Transverse colon (tissue), 4 donors: ENCODE measurements at regions of chr4 and their contacts with region 1.

Region 1: DNA sequence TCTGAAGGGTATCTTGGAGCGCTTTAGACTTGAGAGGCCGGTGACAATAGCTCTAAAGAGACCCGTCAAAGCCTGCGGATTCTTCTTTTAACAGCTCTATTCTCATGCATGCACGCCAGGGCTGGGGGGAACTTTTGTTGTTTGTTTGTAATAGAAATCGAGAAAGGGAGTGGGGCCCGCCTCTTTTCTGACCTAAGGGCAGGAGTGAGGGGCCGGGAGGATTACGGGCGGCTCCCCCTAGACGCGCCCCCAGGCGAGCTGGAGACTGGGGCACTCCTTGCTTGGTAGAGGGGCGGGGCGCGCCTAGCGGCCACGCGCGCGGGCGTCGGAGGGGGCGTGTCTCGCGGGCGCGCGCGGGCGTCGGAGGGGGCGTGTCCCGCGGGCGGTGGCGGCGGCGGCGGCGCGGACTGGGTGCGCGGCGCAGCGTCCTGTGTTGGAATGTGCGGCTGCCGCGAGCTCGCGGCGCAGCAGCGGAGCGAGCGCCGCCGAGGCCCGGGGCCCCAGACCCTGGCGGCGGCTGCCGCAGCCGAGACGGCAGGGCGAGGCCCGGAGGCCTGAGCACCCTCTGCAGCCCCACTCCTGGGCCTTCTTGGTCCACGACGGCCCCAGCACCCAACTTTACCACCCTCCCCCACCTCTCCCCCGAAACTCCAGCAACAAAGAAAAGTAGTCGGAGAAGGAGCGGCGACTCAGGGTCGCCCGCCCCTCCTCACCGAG is at the start of gene REST:
- DNase-seq: peak; percentile 88
- H3K4me3 ChIP-seq: peak within 1 kb of the TSS; percentile 78 to 99 (median 93)
- H3K27ac ChIP-seq: peak within 1 kb of the TSS; percentile 92 to 98 (median 97)
- H3K4me1 ChIP-seq: peaks cover 17 to 40% (median 24%) of the 10 kb centered on the region in 4 donors
- H3K27me3 ChIP-seq: no peaks in the 10 kb centered on the region
- CTCF ChIP-seq: no peak
- EP300 ChIP-seq: no peak
- POLR2A ChIP-seq: peak; percentile 20
- total RNA-seq, gene REST: 18.7 to 47.8 (median 27.1) TPM

Region 2: DNA sequence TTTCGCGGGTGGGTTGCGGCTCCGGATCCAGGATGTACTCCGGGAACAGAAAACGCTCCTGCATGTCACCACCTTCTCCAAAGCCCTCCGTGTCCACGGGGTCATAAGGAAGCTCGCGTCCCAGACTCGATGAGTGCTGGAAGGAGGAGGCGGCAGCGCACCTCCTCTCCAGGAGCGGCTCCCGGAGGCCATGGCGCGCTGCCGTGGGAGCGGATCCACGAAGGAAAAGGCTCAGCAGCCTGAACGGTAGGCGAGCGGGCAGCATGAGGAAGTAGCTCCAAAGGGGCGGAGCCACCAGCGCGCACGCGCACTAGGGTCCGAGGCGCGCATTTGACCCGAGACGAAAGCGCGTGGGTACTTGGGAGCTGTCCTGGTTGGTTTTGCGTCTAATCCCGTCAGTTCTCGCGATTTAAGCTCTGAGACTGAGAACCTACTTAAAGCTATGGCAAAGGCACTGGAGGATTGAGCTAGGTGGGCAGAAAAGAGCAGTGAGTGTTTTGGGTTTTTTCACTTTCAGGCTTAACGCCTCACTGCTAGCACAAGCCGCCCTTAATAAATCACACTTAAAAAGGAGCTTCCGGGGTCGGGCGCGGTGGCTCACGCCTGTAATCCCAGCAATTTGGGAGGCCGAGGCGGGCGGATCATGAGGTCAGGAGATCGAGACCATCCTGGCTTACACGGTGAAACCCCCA is 69.8 kb after region 1 on chr4 and contains the start of gene NOA1:
- in situ Hi-C with region 1: no loop called
- intact Hi-C with region 1: loop called (anchors 5 kb)
- DNase-seq: peak; percentile 99
- H3K4me3 ChIP-seq: peak within 1 kb of the TSS; percentile 74 to 96 (median 78)
- H3K27ac ChIP-seq: peak within 1 kb of the TSS; percentile 96 to 98 (median 97)
- H3K4me1 ChIP-seq: peaks cover 14 to 48% (median 42%) of the 10 kb centered on the region in 4 donors
- H3K27me3 ChIP-seq: no peaks in the 10 kb centered on the region
- CTCF ChIP-seq: no peak
- EP300 ChIP-seq: no peak
- POLR2A ChIP-seq: peak; percentile 81
- total RNA-seq, gene NOA1: 32.5 to 75.4 (median 39.6) TPM

Region 3: GRCh38 chr4:57080781-57081650 is 173.4 kb after region 1 on chr4:
- in situ Hi-C with region 1: no loop called
- intact Hi-C with region 1: no loop called
- DNase-seq: no peak
- H3K4me3 ChIP-seq: no peak overlapping the region
- H3K27ac ChIP-seq: peak overlapping the region; percentile 66 to 77 (median 76)
- H3K4me1 ChIP-seq: peaks cover 0 to 42% (median 20%) of the 10 kb centered on the region in 4 donors
- H3K27me3 ChIP-seq: no peaks in the 10 kb centered on the region
- CTCF ChIP-seq: no peak
- EP300 ChIP-seq: peak; percentile 10
- POLR2A ChIP-seq: no peak